ENCODE measurements at regions of chr2 and their contacts with region 1.

Region 1: DNA sequence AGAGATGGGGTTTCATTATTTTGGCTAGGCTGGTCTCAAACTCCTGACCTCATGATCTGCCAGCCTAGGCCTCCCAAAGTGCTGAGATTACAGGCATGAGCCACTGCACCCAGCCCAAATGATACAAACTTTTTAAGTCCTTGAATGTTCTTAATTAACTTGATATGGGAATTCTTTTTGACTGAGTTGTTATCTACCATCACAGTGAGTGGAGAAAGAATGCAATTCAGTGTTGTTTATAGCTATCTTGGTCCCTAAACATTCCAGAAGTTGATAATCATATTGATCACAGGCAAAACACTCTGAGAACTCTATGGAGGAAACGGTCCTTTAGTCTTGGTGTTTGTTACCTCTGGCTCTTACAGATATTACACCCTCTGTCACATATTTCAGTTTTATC is 1072.5 kb downstream of the SUCLG1 start:
- DNase-seq: no peak
- ATAC-seq: no peak
- H3K4me3 ChIP-seq: no peak overlapping the region
- H3K27ac ChIP-seq: no peak overlapping the region
- H3K4me1 ChIP-seq: no peaks in the 10 kb centered on the region
- H3K27me3 ChIP-seq: no peaks in the 10 kb centered on the region
- CTCF ChIP-seq: no peak
- EP300 ChIP-seq: no peak
- POLR2A ChIP-seq: no peak
- RAD21 ChIP-seq: no peak

Region 2: DNA sequence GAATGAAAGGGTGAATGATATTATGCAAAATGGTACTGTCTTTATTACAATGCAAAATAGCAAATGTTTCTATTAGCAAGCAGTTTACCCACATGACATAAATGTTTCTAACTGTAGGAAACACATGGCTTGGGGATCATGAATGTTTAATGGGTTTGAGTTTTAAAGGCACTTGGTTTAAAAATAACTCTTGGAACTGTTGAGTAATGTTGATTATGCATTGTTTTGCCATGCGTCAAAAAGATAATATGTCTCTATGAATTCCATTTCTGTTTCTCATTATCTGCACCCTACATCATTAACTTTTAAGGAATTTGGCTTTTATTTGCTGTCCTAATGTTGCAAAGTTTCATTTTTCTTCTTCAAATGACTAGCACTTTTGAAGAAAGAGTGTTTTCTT is 282.9 kb before region 1 on chr2:
- CTCF ChIA-PET with region 1: no interaction called
- POLR2A ChIA-PET with region 1: no interaction called
- RAD21 ChIA-PET with region 1: no interaction called
- SMC1A ChIA-PET with region 1: no interaction called
- in situ Hi-C with region 1: no loop called
- intact Hi-C with region 1: loop called (anchors 10 kb)
- DNase-seq: no peak
- ATAC-seq: no peak
- H3K4me3 ChIP-seq: no peak overlapping the region
- H3K27ac ChIP-seq: no peak overlapping the region
- H3K4me1 ChIP-seq: no peaks in the 10 kb centered on the region
- H3K27me3 ChIP-seq: no peaks in the 10 kb centered on the region
- CTCF ChIP-seq: no peak
- EP300 ChIP-seq: no peak
- POLR2A ChIP-seq: no peak
- RAD21 ChIP-seq: no peak